AG04449 (cell line): ENCODE measurements at regions of chr2 and their contacts with region 1.

Region 1: DNA sequence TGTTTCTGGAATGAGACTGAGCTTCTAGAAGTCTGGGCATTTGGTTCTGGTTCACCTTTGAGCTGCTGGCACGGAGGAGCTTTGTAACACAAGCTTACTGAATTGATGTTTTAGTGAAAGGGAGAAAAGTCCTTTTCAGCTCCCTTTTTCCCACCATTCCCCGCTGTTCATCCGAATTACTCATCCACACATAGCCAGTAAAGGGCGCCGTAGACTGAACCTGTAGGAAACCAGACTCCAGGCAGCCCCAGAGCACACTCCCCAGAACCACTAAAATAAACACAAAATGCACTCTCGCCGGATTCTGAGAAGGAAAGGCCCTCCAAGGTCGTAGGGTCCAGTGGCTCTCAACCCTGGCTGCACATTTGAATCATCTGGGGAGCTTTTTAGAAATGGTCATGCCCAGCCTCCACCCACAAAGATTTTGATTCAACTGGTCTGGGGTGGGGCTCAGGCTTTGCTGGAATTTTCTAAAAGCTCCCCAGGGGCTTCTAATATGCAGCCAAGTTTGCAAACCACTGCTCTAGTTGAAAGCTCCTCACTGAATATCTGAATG is 29.6 kb downstream of the TCF7L1 start:
- DNase-seq: no peak
- H3K4me3 ChIP-seq: no peak overlapping the region
- CTCF ChIP-seq: no peak

Region 2: GRCh38 chr2:85151026-85151425 is 11.8 kb before region 1 on chr2:
- CTCF ChIA-PET with region 1: interaction called, 10 read pairs
- POLR2A ChIA-PET with region 1: no interaction called
- DNase-seq: no peak
- H3K4me3 ChIP-seq: no peak overlapping the region
- CTCF ChIP-seq: no peak

Region 3: DNA sequence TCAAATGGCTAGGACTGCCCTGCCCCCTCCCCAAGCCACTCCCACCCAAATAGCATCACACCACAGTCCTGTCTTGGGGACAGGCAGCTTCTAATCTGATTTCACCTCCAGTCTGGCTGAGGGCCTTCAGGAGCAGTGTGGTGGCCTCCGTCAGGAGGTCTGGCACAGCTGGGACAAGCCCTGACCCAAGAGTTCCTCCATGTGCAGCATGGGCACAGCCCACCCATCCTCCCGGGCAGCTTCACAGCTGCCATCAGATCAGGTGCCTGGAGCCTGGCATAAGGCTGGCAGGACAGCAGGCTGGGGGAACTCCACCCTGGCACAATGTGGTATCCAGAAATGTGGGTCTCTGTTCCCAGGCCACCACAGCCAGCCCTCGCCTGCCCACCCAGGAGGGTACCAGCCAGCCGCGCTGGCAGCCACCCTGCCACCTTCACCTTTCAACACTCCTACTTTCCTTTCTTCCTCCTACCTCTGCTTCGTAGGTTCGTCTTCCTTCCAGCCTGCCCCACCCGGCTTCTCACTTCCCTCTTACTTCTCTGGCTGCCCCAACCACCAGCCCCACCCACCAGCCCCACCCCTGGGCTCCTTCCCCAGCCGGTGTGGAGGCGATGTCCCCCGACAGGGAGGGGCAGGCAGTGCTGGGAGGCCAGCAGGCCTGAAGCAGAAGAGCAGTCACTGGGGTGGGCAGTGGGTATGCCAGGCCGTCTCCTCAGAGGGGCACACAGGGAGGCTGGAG is 247.2 kb after region 1 on chr2 and contains the start of gene CAPG:
- CTCF ChIA-PET with region 1: no interaction called
- POLR2A ChIA-PET with region 1: no interaction called
- DNase-seq: no peak
- H3K4me3 ChIP-seq: no peak within 1 kb of the TSS
- CTCF ChIP-seq: no peak